ENCODE measurements at regions of chr9 and their contacts with region 1.

Region 1: DNA sequence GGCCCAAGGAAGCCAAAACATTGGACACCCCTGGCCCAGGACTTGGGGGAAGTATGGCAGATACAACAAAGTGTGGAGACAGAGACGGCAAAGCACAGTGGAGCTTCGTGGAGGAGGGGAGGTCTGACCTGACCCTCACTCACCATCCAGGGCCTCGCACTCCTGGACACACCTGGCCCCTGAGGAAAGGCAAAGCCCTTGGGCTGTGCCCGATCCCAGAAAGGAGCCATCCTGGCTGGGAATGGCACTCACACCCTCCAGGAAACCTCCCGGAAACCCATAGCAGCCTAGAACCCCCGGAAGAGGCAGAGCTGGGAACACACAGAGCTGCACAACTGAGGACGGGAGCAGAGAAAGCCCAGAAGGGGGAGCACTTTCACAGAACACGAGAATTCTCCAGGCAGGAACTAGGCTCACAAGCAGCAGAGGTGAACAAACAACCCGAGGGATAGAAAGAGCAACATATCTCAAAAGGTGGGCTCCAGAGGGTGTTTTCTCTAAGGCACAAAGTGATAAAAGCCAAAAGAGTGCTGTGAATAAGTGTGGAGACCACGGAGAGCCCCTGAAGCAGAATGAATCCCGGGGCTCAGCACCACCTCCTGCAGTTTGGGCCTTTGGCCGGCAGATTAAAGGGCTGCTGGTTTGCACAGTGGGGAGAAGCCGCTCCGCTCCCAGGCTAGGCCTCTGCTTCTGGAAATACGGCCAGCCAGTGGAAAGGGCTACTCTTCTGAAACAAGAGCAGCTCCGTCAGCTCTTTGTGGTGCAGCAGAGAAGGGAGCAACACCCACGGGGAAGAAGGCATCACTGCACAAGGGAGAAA is 108.2 kb downstream of the UBE2R2 start:
- DNase-seq: peak; percentile 16
- ATAC-seq: peak; percentile 69
- H3K4me3 ChIP-seq: no peak overlapping the region
- H3K27ac ChIP-seq: peak overlapping the region; percentile 2; the same call in 1 of the 2 replicates
- H3K4me1 ChIP-seq: no peaks in the 10 kb centered on the region
- H3K27me3 ChIP-seq: no peaks in the 10 kb centered on the region
- CTCF ChIP-seq: peak; percentile 60 to 81 (median 74); a peak in 5 of 6 replicates
- POLR2A ChIP-seq: no peak
- RAD21 ChIP-seq: peak; percentile 67

Region 2: DNA sequence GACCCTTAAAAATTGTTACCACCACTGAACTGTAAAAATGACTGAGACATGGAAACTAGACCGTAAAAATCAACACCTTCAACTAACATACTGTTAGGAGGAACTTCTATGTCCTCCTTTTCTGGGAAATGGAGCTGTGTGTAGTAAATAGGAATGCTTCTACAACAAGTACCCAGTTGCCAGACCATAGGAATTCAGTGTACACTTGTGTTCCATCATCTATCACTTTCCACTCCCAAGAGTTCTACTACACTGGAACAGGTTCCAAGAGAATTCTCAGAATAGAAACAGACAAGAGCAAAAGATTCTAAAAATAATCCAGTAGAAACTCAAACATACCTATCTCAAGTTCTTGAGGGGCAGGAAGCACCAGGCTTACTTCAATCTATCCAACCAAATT is 99.9 kb after region 1 on chr9:
- CTCF ChIA-PET with region 1: interaction called, 3 read pairs
- POLR2A ChIA-PET with region 1: no interaction called
- RAD21 ChIA-PET with region 1: no interaction called
- intact Hi-C with region 1: loop called (anchors 5 kb)
- DNase-seq: no peak
- ATAC-seq: no peak
- H3K4me3 ChIP-seq: no peak overlapping the region
- H3K27ac ChIP-seq: no peak overlapping the region
- H3K4me1 ChIP-seq: 0 out of 4 replicates have a peak, but pooled peaks cover 0 to 2% of the 10 kb centered on the region in 2 experiments
- H3K27me3 ChIP-seq: no peaks in the 10 kb centered on the region
- CTCF ChIP-seq: no peak
- POLR2A ChIP-seq: no peak
- RAD21 ChIP-seq: no peak

Region 3: GRCh38 chr9:34059281-34059680 is 134.1 kb after region 1 on chr9:
- CTCF ChIA-PET with region 1: no interaction called
- POLR2A ChIA-PET with region 1: no interaction called
- RAD21 ChIA-PET with region 1: no interaction called
- intact Hi-C with region 1: no loop called
- DNase-seq: no peak
- ATAC-seq: no peak
- H3K4me3 ChIP-seq: no peak overlapping the region
- H3K27ac ChIP-seq: no peak overlapping the region
- H3K4me1 ChIP-seq: no peaks in the 10 kb centered on the region
- H3K27me3 ChIP-seq: no peaks in the 10 kb centered on the region
- CTCF ChIP-seq: no peak
- POLR2A ChIP-seq: no peak
- RAD21 ChIP-seq: no peak

Region 4: DNA sequence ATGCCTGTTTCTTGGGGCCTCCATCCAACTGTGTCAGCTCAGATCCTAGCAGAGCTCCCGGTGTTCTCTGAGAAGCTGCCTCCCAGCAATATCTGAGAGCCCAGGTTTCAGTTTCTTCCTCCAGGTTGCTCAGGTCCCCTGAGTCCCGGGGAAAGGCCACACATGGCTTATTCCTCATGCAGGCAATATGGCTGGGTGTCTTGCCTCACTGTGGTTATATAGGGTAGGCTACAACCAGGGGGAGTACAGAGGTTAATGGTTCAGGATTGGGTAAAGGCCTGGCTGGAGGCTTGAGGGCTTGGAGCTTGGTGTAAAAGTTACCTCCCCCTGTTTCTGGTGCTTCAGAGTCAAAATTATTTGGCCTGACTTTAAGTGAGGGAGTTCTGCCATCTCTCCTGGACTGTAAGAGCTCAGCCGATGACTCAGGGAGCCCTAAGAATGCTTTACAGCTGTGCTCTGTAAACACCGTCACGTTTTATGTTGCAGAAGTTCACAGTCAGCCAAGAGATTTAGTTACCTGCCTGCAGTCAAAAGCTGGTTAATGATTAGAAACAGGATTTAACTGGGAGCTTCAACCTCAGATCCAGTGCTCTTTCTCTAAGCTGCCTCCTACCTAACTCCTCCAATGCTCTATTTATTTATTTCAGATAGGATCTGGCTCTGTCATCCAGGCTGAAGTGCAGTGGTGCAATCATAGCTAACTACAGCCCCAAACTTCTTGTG is 147.8 kb after region 1 on chr9:
- CTCF ChIA-PET with region 1: interaction called, 10 read pairs
- POLR2A ChIA-PET with region 1: no interaction called
- RAD21 ChIA-PET with region 1: interaction called, 4 to 9 read pairs
- intact Hi-C with region 1: loop called (anchors 1 kb)
- DNase-seq: no peak
- ATAC-seq: peak; percentile 9; the same call in 1 of the 2 replicates
- H3K4me3 ChIP-seq: no peak overlapping the region
- H3K27ac ChIP-seq: peak overlapping the region; percentile 53
- H3K4me1 ChIP-seq: peaks cover 17 to 24% of the 10 kb centered on the region in 2 experiments
- H3K27me3 ChIP-seq: no peaks in the 10 kb centered on the region
- CTCF ChIP-seq: no peak
- POLR2A ChIP-seq: no peak
- RAD21 ChIP-seq: no peak